Sigmoid colon (tissue), 7 donors: ENCODE measurements at regions of chr7 and their contacts with region 1.

Region 1: GRCh38 chr7:94449148-94449725 is 54.5 kb downstream of the COL1A2 start:
- DNase-seq: no peak
- H3K4me3 ChIP-seq: no peak overlapping the region
- H3K27ac ChIP-seq: no peak overlapping the region
- H3K4me1 ChIP-seq: peaks cover 0 to 39% (median 20%) of the 10 kb centered on the region in 4 donors
- H3K27me3 ChIP-seq: no peaks in the 10 kb centered on the region
- CTCF ChIP-seq: peak in 3 of 4 experiments; percentile 46 to 67 (median 66)
- EP300 ChIP-seq: no peak
- POLR2A ChIP-seq: no peak

Region 2: GRCh38 chr7:94509879-94510581 is 60.8 kb after region 1 on chr7:
- intact Hi-C with region 1: loop called (anchors 5 kb)
- DNase-seq: peak; percentile 77
- H3K4me3 ChIP-seq: peak overlapping the region; percentile 75 to 96 (median 82)
- H3K27ac ChIP-seq: peak overlapping the region; percentile 89 to 93 (median 91)
- H3K4me1 ChIP-seq: peaks cover 0 to 38% (median 21%) of the 10 kb centered on the region in 4 donors
- H3K27me3 ChIP-seq: no peaks in the 10 kb centered on the region
- CTCF ChIP-seq: no peak
- EP300 ChIP-seq: no peak
- POLR2A ChIP-seq: peak in 1 of 2 donors; percentile 18

Region 3: GRCh38 chr7:95199779-95200558 is 750.7 kb after region 1 on chr7:
- intact Hi-C with region 1: loop called (anchors 2 kb)
- DNase-seq: peak; percentile 64
- H3K4me3 ChIP-seq: no peak overlapping the region
- H3K27ac ChIP-seq: no peak overlapping the region
- H3K4me1 ChIP-seq: no peaks in the 10 kb centered on the region
- H3K27me3 ChIP-seq: no peaks in the 10 kb centered on the region
- CTCF ChIP-seq: peak; percentile 48 to 66 (median 62)
- EP300 ChIP-seq: no peak
- POLR2A ChIP-seq: no peak

Region 4: GRCh38 chr7:95246831-95247370 is 797.7 kb after region 1 on chr7:
- intact Hi-C with region 1: loop called (anchors 2 kb)
- DNase-seq: peak; percentile 70
- H3K4me3 ChIP-seq: no peak overlapping the region
- H3K27ac ChIP-seq: no peak overlapping the region
- H3K4me1 ChIP-seq: peaks cover 0 to 9% (median 0%) of the 10 kb centered on the region in 4 donors
- H3K27me3 ChIP-seq: no peaks in the 10 kb centered on the region
- CTCF ChIP-seq: peak in 3 of 4 experiments; percentile 74 to 78 (median 76)
- EP300 ChIP-seq: no peak
- POLR2A ChIP-seq: no peak